Mammary epithelial cell (primary cell): ENCODE measurements at regions of chr12 and their contacts with region 1.

Region 1: GRCh38 chr12:45409966-45410365 is 194.1 kb downstream of the ANO6 start:
- DNase-seq: peak; percentile 55
- H3K4me3 ChIP-seq: no peak overlapping the region
- H3K27ac ChIP-seq: peak overlapping the region; percentile 1
- H3K4me1 ChIP-seq: no peaks in the 10 kb centered on the region
- H3K27me3 ChIP-seq: no peaks in the 10 kb centered on the region
- CTCF ChIP-seq: no peak

Region 2: GRCh38 chr12:45343269-45344051 is 66.5 kb before region 1 on chr12:
- CTCF ChIA-PET with region 1: no interaction called
- dilution Hi-C with region 1: no loop called
- in situ Hi-C with region 1: loop called in 1 of 2 experiments (anchors 10 kb)
- intact Hi-C with region 1: no loop called
- DNase-seq: peak; percentile 54
- H3K4me3 ChIP-seq: no peak overlapping the region
- H3K27ac ChIP-seq: no peak overlapping the region
- H3K4me1 ChIP-seq: peaks cover 16% of the 10 kb centered on the region
- H3K27me3 ChIP-seq: no peaks in the 10 kb centered on the region
- CTCF ChIP-seq: no peak

Region 3: DNA sequence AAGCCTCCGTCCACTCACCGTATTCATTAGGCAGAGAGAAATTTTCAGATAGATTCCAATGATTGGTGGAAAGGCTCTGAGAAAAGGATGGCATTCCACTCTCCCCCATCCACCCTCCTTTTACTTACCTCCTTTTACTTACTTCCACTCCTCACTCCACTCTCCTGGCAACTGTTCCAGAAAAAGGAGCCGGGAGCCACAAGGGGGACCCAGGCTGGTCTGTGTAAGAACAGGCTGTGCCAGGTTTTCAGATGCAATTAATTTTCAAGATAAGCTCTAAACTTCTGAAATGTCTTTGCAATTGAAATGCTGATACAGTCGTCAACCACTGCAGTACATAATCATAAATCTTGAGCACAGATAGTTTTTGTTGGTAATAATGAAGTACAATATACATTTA is 54.7 kb after region 1 on chr12:
- CTCF ChIA-PET with region 1: no interaction called
- dilution Hi-C with region 1: no loop called
- in situ Hi-C with region 1: loop called in 1 of 2 experiments (anchors 10 kb)
- intact Hi-C with region 1: no loop called
- DNase-seq: no peak
- H3K4me3 ChIP-seq: no peak overlapping the region
- H3K27ac ChIP-seq: no peak overlapping the region
- H3K4me1 ChIP-seq: no peaks in the 10 kb centered on the region
- H3K27me3 ChIP-seq: peaks cover 2% of the 10 kb centered on the region
- CTCF ChIP-seq: no peak